ENCODE measurements at regions of chr6 and their contacts with region 1.

Region 1: GRCh38 chr6:50236164-50236563 is 186.4 kb upstream of the DEFB112 start:
- DNase-seq: no peak
- H3K4me3 ChIP-seq: no peak overlapping the region
- H3K27ac ChIP-seq: no peak overlapping the region
- H3K4me1 ChIP-seq: no peaks in the 10 kb centered on the region
- H3K27me3 ChIP-seq: no peaks in the 10 kb centered on the region
- CTCF ChIP-seq: no peak

Region 2: GRCh38 chr6:50049829-50050228 is 186.3 kb before region 1 on chr6 and contains the start of gene DEFB112:
- CTCF ChIA-PET with region 1: interaction called, 17 read pairs
- POLR2A ChIA-PET with region 1: no interaction called
- intact Hi-C with region 1: no loop called
- DNase-seq: no peak
- H3K4me3 ChIP-seq: no peak within 1 kb of the TSS
- H3K27ac ChIP-seq: no peak within 1 kb of the TSS
- H3K4me1 ChIP-seq: no peaks in the 10 kb centered on the region
- H3K27me3 ChIP-seq: peaks cover 23% of the 10 kb centered on the region
- CTCF ChIP-seq: no peak
- total RNA-seq, gene DEFB112: not detected in 2 replicates

Measured in A673 (cell line).